CD8-positive, alpha-beta T cell (primary cell): ENCODE measurements at regions of chr2 and their contacts with region 1.

Region 1: DNA sequence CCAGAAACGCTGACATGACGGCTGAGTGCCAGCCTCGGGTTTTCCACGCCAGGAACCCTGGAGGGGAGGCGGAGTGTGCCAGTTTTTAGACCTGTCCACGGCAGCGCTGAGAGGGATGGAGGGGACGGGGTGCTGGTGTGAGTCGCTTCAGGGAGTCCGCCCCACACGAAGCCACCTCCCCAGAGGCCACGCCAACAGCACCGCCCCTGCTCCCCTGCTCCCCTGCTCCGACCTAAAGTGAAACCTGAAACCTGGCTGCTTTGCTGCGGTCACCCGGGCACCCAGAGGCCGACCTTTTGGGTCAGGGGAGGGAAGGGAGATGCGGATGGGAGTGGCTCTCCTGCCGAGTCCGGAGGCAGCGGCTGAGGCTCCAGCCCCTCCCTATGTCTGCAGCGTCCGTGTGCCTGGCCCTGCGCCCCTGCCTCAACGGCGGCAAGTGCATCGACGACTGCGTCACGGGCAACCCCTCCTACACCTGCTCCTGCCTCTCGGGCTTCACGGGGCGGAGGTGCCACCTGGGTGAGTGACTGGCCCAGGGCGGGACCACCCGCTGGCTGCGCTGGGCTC is 38.1 kb downstream of the SNED1 start:
- DNase-seq: peak; percentile 45 to 84 (median 68)
- ATAC-seq: peak; percentile 68
- H3K4me3 ChIP-seq: peak overlapping the region; percentile 66 to 75
- H3K4me3 Mint-ChIP-seq: peak overlapping the region; percentile 80
- H3K27ac ChIP-seq: peak overlapping the region; percentile 80 to 88
- H3K27ac Mint-ChIP-seq: peak overlapping the region; percentile 88
- H3K4me1 ChIP-seq: peaks cover 25% of the 10 kb centered on the region
- H3K4me1 Mint-ChIP-seq: peaks cover 15% of the 10 kb centered on the region
- H3K27me3 ChIP-seq: no peaks in the 10 kb centered on the region
- H3K27me3 Mint-ChIP-seq: no peaks in the 10 kb centered on the region
- CTCF ChIP-seq: no peak

Region 2: GRCh38 chr2:240998120-240998994 is 38.1 kb before region 1 on chr2 and contains the start of gene SNED1:
- CTCF ChIA-PET with region 1: no interaction called
- POLR2A ChIA-PET with region 1: no interaction called
- intact Hi-C with region 1: loop called in 1 of 2 experiments (anchors 5 kb)
- DNase-seq: peak in 8 of 9 experiments; percentile 57 to 85 (median 75)
- ATAC-seq: peak; percentile 68
- H3K4me3 ChIP-seq: peak within 1 kb of the TSS; percentile 47 to 57
- H3K4me3 Mint-ChIP-seq: peak within 1 kb of the TSS; percentile 74
- H3K27ac ChIP-seq: peak within 1 kb of the TSS; percentile 36 to 63
- H3K27ac Mint-ChIP-seq: peak within 1 kb of the TSS; percentile 76
- H3K4me1 ChIP-seq: peaks cover 24% of the 10 kb centered on the region
- H3K4me1 Mint-ChIP-seq: peaks cover 21% of the 10 kb centered on the region
- H3K27me3 ChIP-seq: peaks cover 0 to 3% of the 10 kb centered on the region in 2 experiments
- H3K27me3 Mint-ChIP-seq: peaks cover 15% of the 10 kb centered on the region
- CTCF ChIP-seq: no peak
- total RNA-seq, gene SNED1: 32.4 to 38.4 TPM

Region 3: DNA sequence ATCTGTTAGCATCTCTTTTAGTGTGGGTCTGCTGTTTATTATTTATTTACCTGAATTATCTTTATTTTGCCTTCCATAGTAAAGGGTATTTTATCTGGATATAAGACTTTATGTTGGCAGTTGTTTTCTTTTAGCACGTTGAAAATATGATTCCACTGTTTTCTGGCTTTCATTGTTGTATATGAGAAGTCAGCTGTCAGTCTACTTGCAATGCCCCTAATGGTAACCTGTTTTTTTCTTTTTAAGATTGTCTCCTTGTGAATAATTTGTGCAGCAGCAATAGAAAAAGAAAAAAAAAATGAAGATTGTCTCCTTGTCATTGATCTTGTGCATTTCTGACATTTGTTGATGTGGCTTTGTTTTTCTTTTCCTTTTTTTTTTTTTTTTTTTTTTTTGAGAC is 10.8 kb before region 1 on chr2:
- CTCF ChIA-PET with region 1: no interaction called
- POLR2A ChIA-PET with region 1: no interaction called
- intact Hi-C with region 1: no loop called
- DNase-seq: no peak
- ATAC-seq: no peak
- H3K4me3 ChIP-seq: no peak overlapping the region
- H3K4me3 Mint-ChIP-seq: no peak overlapping the region
- H3K27ac ChIP-seq: no peak overlapping the region
- H3K27ac Mint-ChIP-seq: no peak overlapping the region
- H3K4me1 ChIP-seq: no peaks in the 10 kb centered on the region
- H3K4me1 Mint-ChIP-seq: no peaks in the 10 kb centered on the region
- H3K27me3 ChIP-seq: no peaks in the 10 kb centered on the region
- H3K27me3 Mint-ChIP-seq: no peaks in the 10 kb centered on the region
- CTCF ChIP-seq: no peak

Region 4: DNA sequence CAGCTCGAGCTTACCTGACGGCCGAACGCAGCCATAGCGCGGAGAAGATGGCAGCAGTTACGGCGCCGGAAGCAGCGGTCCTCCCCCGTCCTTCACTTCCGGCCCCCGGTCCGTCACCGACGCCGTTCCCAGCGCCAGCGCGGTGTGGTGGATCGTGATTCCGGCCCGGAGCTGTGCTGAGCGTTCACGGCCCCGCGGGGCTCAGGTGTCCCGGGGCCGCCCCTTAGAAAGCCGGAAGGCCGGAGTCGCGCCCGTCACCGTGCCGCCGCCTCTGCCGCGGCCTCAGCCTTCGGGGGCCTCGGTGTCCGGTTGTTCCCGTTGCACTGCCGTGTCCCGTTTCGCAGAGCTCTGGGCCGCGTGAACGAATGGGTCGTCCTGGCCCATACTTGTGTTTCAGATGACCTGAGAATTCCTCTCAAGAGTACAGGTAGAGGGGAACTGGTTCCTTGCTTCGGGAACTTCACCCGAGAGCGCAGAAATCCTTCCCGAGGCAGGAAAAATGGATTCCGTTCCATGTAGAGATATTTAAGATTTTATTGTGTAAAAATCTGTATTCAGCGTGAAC is 65.8 kb after region 1 on chr2 and contains the start of gene MTERF4:
- CTCF ChIA-PET with region 1: no interaction called
- POLR2A ChIA-PET with region 1: no interaction called
- intact Hi-C with region 1: loop called in 1 of 2 experiments (anchors 5 kb)
- DNase-seq: peak; percentile 74 to 95 (median 88)
- ATAC-seq: peak; percentile 85
- H3K4me3 ChIP-seq: peak within 1 kb of the TSS; percentile 74 to 83
- H3K4me3 Mint-ChIP-seq: peak within 1 kb of the TSS; percentile 95
- H3K27ac ChIP-seq: peak within 1 kb of the TSS; percentile 86 to 94
- H3K27ac Mint-ChIP-seq: peak within 1 kb of the TSS; percentile 98
- H3K4me1 ChIP-seq: peaks cover 71% of the 10 kb centered on the region
- H3K4me1 Mint-ChIP-seq: peaks cover 84% of the 10 kb centered on the region
- H3K27me3 ChIP-seq: no peaks in the 10 kb centered on the region
- H3K27me3 Mint-ChIP-seq: no peaks in the 10 kb centered on the region
- CTCF ChIP-seq: no peak
- total RNA-seq, gene MTERF4: 100.0 to 102 TPM